PC-9 (cell line): ENCODE measurements at regions of chr2 and their contacts with region 1.

Region 1: GRCh38 chr2:69643602-69644505 is at the start of gene AAK1:
- DNase-seq: peak; percentile 73 to 86
- H3K4me3 ChIP-seq: peak within 1 kb of the TSS; percentile 86
- H3K27ac ChIP-seq: peak within 1 kb of the TSS; percentile 90
- H3K4me1 ChIP-seq: peaks cover 48% of the 10 kb centered on the region
- H3K27me3 ChIP-seq: no peaks in the 10 kb centered on the region
- CTCF ChIP-seq: no peak
- total RNA-seq, gene AAK1: 50.3 and 66.6 TPM in 2 replicates

Region 2: GRCh38 chr2:69436938-69437750 is 206.7 kb before region 1 on chr2 and contains the start of gene NFU1:
- CTCF ChIA-PET with region 1: no interaction called
- POLR2A ChIA-PET with region 1: interaction called, 20 read pairs
- intact Hi-C with region 1: no loop called
- DNase-seq: peak; percentile 77 to 88
- H3K4me3 ChIP-seq: peak within 1 kb of the TSS; percentile 80
- H3K27ac ChIP-seq: peak within 1 kb of the TSS; percentile 56
- H3K4me1 ChIP-seq: peaks cover 15% of the 10 kb centered on the region
- H3K27me3 ChIP-seq: no peaks in the 10 kb centered on the region
- CTCF ChIP-seq: peak; percentile 56; the same call in 1 of the 2 replicates
- total RNA-seq, gene NFU1: 29.3 and 35.1 TPM in 2 replicates

Region 3: GRCh38 chr2:69567157-69567908 is 76.5 kb before region 1 on chr2:
- CTCF ChIA-PET with region 1: interaction called, 4 read pairs
- POLR2A ChIA-PET with region 1: no interaction called
- intact Hi-C with region 1: loop called (anchors 1 kb)
- DNase-seq: peak; percentile 67 to 99
- H3K4me3 ChIP-seq: peak overlapping the region; percentile 12; the same call in 1 of the 2 replicates
- H3K27ac ChIP-seq: peak overlapping the region; percentile 91
- H3K4me1 ChIP-seq: peaks cover 84% of the 10 kb centered on the region
- H3K27me3 ChIP-seq: no peaks in the 10 kb centered on the region
- CTCF ChIP-seq: no peak

Region 4: GRCh38 chr2:69694894-69695849 is 51.3 kb after region 1 on chr2:
- CTCF ChIA-PET with region 1: no interaction called
- POLR2A ChIA-PET with region 1: no interaction called
- intact Hi-C with region 1: loop called (anchors 5 kb)
- DNase-seq: peak in 1 of 2 experiments; percentile 94
- H3K4me3 ChIP-seq: peak overlapping the region; percentile 32; the same call in 1 of the 2 replicates
- H3K27ac ChIP-seq: peak overlapping the region; percentile 77
- H3K4me1 ChIP-seq: peaks cover 43% of the 10 kb centered on the region
- H3K27me3 ChIP-seq: no peaks in the 10 kb centered on the region
- CTCF ChIP-seq: no peak

Region 5: DNA sequence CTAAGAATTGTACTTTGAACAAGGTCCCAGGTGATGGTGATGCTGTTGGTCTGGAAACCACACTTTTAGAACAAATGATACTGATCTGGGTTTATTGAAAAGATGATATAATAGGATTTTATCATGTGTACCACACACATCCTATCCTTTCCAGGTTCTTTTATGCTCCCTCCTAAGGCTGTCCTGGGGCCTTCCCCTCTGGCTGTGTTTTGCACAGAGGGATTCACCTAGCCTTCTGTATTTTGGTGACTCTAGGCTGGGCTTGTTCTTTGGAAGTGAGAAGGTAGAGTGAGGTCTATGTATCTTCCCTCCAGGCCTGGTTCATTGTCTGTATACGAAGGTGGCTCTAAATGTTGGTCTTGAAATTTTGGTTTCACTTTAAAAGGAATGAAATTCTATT is 110.8 kb after region 1 on chr2:
- CTCF ChIA-PET with region 1: no interaction called
- POLR2A ChIA-PET with region 1: no interaction called
- intact Hi-C with region 1: no loop called
- DNase-seq: no peak
- H3K4me3 ChIP-seq: no peak overlapping the region
- H3K27ac ChIP-seq: peak overlapping the region; percentile 31
- H3K4me1 ChIP-seq: peaks cover 31% of the 10 kb centered on the region
- H3K27me3 ChIP-seq: no peaks in the 10 kb centered on the region
- CTCF ChIP-seq: no peak

Region 6: GRCh38 chr2:70726947-70727725 is 1083.3 kb after region 1 on chr2:
- CTCF ChIA-PET with region 1: no interaction called
- POLR2A ChIA-PET with region 1: interaction called, 11 read pairs
- intact Hi-C with region 1: no loop called
- DNase-seq: no peak
- H3K4me3 ChIP-seq: no peak overlapping the region
- H3K27ac ChIP-seq: no peak overlapping the region
- H3K4me1 ChIP-seq: no peaks in the 10 kb centered on the region
- H3K27me3 ChIP-seq: peaks cover 9% of the 10 kb centered on the region
- CTCF ChIP-seq: no peak